ENCODE measurements at regions of chr12 and their contacts with region 1.

Region 1: GRCh38 chr12:133037207-133038005 is at the start of gene ZNF84:
- DNase-seq: peak; percentile 92 to 99 (median 96)
- ATAC-seq: peak; percentile 95
- H3K4me3 ChIP-seq: peak within 1 kb of the TSS; percentile 68
- H3K4me3 Mint-ChIP-seq: peak within 1 kb of the TSS; percentile 95
- H3K27ac ChIP-seq: peak within 1 kb of the TSS; percentile 70 to 79
- H3K27ac Mint-ChIP-seq: peak within 1 kb of the TSS; percentile 90
- H3K4me1 ChIP-seq: peaks cover 12% of the 10 kb centered on the region
- H3K4me1 Mint-ChIP-seq: peaks cover 25% of the 10 kb centered on the region
- H3K27me3 ChIP-seq: no peaks in the 10 kb centered on the region
- H3K27me3 Mint-ChIP-seq: no peaks in the 10 kb centered on the region
- CTCF ChIP-seq: no peak
- total RNA-seq, gene ZNF84: 22.8 to 26.0 TPM

Region 2: GRCh38 chr12:132614861-132615578 is 422.4 kb before region 1 on chr12:
- CTCF ChIA-PET with region 1: no interaction called
- POLR2A ChIA-PET with region 1: no interaction called
- intact Hi-C with region 1: no loop called
- DNase-seq: peak; percentile 66 to 90 (median 74)
- ATAC-seq: peak; percentile 86
- H3K4me3 ChIP-seq: no peak overlapping the region
- H3K4me3 Mint-ChIP-seq: no peak overlapping the region
- H3K27ac ChIP-seq: no peak overlapping the region
- H3K27ac Mint-ChIP-seq: no peak overlapping the region
- H3K4me1 ChIP-seq: peaks cover 17% of the 10 kb centered on the region
- H3K4me1 Mint-ChIP-seq: peaks cover 17% of the 10 kb centered on the region
- H3K27me3 ChIP-seq: peaks cover 38 to 43% of the 10 kb centered on the region in 2 experiments
- H3K27me3 Mint-ChIP-seq: peaks cover 48% of the 10 kb centered on the region
- CTCF ChIP-seq: peak; percentile 94

Region 3: DNA sequence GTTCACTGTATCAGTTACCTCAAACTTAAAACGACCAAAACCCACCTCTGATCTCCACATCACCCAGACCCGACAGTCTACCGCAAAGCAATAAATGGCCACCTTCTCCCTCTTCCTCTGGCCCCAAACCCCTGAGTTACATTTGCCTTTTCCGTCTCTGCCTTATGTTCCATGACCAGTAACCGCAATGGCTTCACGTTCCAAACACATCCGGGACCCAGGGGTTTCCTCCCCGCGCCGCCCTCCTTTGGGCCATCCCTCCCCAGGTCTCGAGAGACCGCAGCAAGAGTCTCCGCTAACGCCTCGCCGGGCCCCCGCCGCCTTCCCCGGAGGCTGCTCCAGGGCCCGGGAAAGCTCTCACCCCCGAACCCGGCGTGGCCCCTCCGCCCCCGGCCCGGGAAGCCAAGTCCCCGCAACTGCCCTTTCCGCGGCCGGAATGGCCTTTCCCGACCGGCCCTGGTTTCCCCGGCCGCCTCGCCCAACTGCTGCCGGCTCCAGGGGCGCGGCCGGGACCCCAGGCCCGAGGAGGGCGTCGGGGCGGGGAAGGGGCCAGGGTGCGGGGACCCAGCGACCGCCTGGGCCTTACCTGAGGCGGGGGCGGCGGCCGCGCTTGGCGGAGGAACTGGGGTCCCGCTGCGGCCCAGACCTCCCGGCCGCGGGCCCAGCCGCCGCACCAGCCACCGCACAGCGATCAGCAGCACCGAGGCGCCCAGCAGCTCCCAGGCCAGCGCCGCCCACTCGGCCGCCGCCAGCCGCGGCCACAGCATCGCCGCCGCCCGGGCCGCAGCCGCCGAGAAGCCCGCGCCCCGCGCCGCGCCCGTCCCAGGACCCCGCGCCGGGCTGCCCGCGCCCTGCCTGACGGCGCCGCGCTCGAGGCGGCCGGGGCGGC is 276.1 kb before region 1 on chr12 and contains the start of gene ANKLE2:
- CTCF ChIA-PET with region 1: no interaction called
- POLR2A ChIA-PET with region 1: no interaction called
- intact Hi-C with region 1: loop called in 1 of 2 experiments (anchors 2 kb)
- DNase-seq: peak; percentile 31 to 78 (median 56)
- ATAC-seq: peak; percentile 56
- H3K4me3 ChIP-seq: peak within 1 kb of the TSS; percentile 82
- H3K4me3 Mint-ChIP-seq: peak within 1 kb of the TSS; percentile 93
- H3K27ac ChIP-seq: peak within 1 kb of the TSS; percentile 84 to 86
- H3K27ac Mint-ChIP-seq: peak within 1 kb of the TSS; percentile 95
- H3K4me1 ChIP-seq: peaks cover 39% of the 10 kb centered on the region
- H3K4me1 Mint-ChIP-seq: peaks cover 36% of the 10 kb centered on the region
- H3K27me3 ChIP-seq: no peaks in the 10 kb centered on the region
- H3K27me3 Mint-ChIP-seq: no peaks in the 10 kb centered on the region
- CTCF ChIP-seq: no peak
- total RNA-seq, gene ANKLE2: 61.7 to 65.7 TPM

Region 4: GRCh38 chr12:132986001-132986912 is 51.1 kb before region 1 on chr12 and contains the start of gene ZNF26:
- CTCF ChIA-PET with region 1: no interaction called
- POLR2A ChIA-PET with region 1: interaction called, 14 read pairs
- intact Hi-C with region 1: loop called (anchors 1 to 2 kb)
- DNase-seq: peak; percentile 75 to 95 (median 84)
- ATAC-seq: peak; percentile 96
- H3K4me3 ChIP-seq: peak within 1 kb of the TSS; percentile 85
- H3K4me3 Mint-ChIP-seq: peak within 1 kb of the TSS; percentile 97
- H3K27ac ChIP-seq: peak within 1 kb of the TSS; percentile 76 to 84
- H3K27ac Mint-ChIP-seq: peak within 1 kb of the TSS; percentile 96
- H3K4me1 ChIP-seq: peaks cover 29% of the 10 kb centered on the region
- H3K4me1 Mint-ChIP-seq: peaks cover 38% of the 10 kb centered on the region
- H3K27me3 ChIP-seq: no peaks in the 10 kb centered on the region
- H3K27me3 Mint-ChIP-seq: no peaks in the 10 kb centered on the region
- CTCF ChIP-seq: no peak
- total RNA-seq, gene ZNF26: 29.1 to 31.9 TPM

Region 5: DNA sequence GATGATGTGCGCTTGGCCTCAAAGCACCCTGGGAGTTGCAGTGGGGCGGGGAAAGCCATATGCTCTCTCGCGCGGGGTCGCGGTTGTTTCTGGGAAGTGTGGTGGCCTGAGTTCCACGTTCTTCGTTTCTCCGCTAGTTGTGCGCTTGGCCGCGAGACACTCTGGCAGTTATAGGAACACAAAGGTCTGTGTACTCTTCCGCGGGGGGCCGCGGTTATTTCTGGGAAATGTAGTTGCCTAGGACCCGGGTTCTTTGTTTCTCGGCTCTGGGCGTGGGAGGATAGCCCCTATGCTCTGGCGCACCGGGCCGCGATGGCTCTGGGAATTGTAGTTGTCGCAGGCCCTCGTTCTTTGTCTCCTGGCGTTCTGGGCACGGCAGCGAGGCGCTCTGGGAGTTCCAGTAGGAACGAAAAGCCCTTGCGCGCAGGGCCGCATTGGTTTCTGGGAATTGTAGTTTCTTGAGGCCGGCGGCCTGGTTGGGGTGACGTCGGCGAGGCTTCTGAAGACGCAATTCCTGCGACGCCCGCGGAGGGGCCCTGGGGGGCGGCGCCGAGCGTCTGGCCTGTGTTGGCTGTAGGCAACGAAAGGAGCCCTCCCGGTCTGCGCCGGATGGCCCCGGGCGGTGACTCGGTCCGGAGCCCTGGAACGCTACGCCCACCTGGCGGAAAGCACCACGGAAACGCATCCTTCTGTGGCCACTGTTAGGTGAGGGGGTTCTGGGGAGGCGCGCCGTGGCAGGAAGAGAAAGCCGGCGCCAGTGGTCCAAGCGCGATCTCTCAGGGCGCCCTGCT is 43.2 kb after region 1 on chr12 and contains the start of gene ZNF140:
- CTCF ChIA-PET with region 1: interaction called, 3 read pairs
- POLR2A ChIA-PET with region 1: interaction called, 28 read pairs
- intact Hi-C with region 1: loop called (anchors 1 kb)
- DNase-seq: peak; percentile 86 to 98 (median 92)
- ATAC-seq: peak; percentile 54
- H3K4me3 ChIP-seq: peak within 1 kb of the TSS; percentile 82
- H3K4me3 Mint-ChIP-seq: peak within 1 kb of the TSS; percentile 74
- H3K27ac ChIP-seq: peak within 1 kb of the TSS; percentile 98 to 99
- H3K27ac Mint-ChIP-seq: no peak within 1 kb of the TSS
- H3K4me1 ChIP-seq: peaks cover 23% of the 10 kb centered on the region
- H3K4me1 Mint-ChIP-seq: peaks cover 16% of the 10 kb centered on the region
- H3K27me3 ChIP-seq: no peaks in the 10 kb centered on the region
- H3K27me3 Mint-ChIP-seq: no peaks in the 10 kb centered on the region
- CTCF ChIP-seq: peak; percentile 43
- total RNA-seq, gene ZNF140: 6.6 to 8.5 TPM

Region 6: GRCh38 chr12:133165776-133166175 is 128.4 kb after region 1 on chr12:
- CTCF ChIA-PET with region 1: no interaction called
- POLR2A ChIA-PET with region 1: no interaction called
- intact Hi-C with region 1: no loop called
- DNase-seq: no peak
- ATAC-seq: no peak
- H3K4me3 ChIP-seq: no peak overlapping the region
- H3K4me3 Mint-ChIP-seq: no peak overlapping the region
- H3K27ac ChIP-seq: no peak overlapping the region
- H3K27ac Mint-ChIP-seq: no peak overlapping the region
- H3K4me1 ChIP-seq: no peaks in the 10 kb centered on the region
- H3K4me1 Mint-ChIP-seq: no peaks in the 10 kb centered on the region
- H3K27me3 ChIP-seq: no peaks in the 10 kb centered on the region
- H3K27me3 Mint-ChIP-seq: no peaks in the 10 kb centered on the region
- CTCF ChIP-seq: no peak

Measured in CD4-positive, alpha-beta T cell (primary cell).